Activated CD4-positive, alpha-beta memory T cell treated with anti-CD3 and anti-CD28 coated beads for 36 hours (primary cell): ENCODE measurements at regions of chr10 and their contacts with region 1.

Region 1: GRCh38 chr10:110556969-110557601 is 10.4 kb upstream of the SMC3 start:
- DNase-seq: peak; percentile 80
- H3K4me3 Mint-ChIP-seq: no peak overlapping the region
- H3K27ac Mint-ChIP-seq: no peak overlapping the region
- H3K4me1 Mint-ChIP-seq: peaks cover 2% of the 10 kb centered on the region
- H3K27me3 Mint-ChIP-seq: peaks cover under 1% of the 10 kb centered on the region

Region 2: GRCh38 chr10:110446954-110447608 is 110.0 kb before region 1 on chr10:
- CTCF ChIA-PET with region 1: no interaction called
- POLR2A ChIA-PET with region 1: no interaction called
- intact Hi-C with region 1: no loop called
- DNase-seq: no peak
- H3K4me3 Mint-ChIP-seq: no peak overlapping the region
- H3K27ac Mint-ChIP-seq: no peak overlapping the region
- H3K4me1 Mint-ChIP-seq: peaks cover 3% of the 10 kb centered on the region
- H3K27me3 Mint-ChIP-seq: no peaks in the 10 kb centered on the region

Region 3: DNA sequence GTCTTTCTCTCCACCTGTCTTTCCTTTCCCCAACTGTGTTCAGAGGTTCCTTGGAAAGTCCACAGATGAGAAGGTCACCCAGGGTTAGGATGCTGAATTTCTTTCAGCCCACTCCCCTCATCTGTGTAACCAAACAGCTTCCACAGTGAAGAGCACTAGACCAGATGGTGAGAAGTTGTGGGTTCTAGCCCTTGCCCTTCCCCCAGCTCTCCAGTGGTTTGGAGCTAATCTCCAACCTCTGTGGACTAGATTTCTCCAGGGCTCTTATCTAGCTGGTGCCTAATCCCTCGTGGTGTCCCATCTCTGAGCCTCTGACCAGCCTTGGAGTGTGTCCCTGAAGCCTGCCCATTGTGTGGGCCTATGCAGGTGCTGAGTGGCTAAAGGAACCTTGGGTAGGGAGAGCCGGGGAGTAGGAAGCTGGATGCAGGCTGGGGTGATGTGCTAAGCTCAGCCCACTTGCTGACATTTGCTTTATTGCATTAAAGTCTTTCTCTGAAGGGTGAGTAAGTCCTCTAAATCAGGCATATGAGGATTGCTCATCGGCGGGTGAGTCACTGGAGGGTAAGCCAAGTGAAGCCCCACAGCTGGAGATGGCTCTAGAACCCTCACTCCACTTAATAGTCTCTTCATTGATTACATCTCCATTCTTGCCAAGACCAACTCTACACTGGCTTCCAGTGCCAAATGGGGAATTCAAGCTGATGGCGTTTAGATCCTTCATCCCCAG is 44.5 kb before region 1 on chr10:
- CTCF ChIA-PET with region 1: no interaction called
- POLR2A ChIA-PET with region 1: no interaction called
- intact Hi-C with region 1: no loop called
- DNase-seq: peak; percentile 82
- H3K4me3 Mint-ChIP-seq: no peak overlapping the region
- H3K27ac Mint-ChIP-seq: peak overlapping the region; percentile 85
- H3K4me1 Mint-ChIP-seq: peaks cover 60% of the 10 kb centered on the region
- H3K27me3 Mint-ChIP-seq: no peaks in the 10 kb centered on the region

Region 4: DNA sequence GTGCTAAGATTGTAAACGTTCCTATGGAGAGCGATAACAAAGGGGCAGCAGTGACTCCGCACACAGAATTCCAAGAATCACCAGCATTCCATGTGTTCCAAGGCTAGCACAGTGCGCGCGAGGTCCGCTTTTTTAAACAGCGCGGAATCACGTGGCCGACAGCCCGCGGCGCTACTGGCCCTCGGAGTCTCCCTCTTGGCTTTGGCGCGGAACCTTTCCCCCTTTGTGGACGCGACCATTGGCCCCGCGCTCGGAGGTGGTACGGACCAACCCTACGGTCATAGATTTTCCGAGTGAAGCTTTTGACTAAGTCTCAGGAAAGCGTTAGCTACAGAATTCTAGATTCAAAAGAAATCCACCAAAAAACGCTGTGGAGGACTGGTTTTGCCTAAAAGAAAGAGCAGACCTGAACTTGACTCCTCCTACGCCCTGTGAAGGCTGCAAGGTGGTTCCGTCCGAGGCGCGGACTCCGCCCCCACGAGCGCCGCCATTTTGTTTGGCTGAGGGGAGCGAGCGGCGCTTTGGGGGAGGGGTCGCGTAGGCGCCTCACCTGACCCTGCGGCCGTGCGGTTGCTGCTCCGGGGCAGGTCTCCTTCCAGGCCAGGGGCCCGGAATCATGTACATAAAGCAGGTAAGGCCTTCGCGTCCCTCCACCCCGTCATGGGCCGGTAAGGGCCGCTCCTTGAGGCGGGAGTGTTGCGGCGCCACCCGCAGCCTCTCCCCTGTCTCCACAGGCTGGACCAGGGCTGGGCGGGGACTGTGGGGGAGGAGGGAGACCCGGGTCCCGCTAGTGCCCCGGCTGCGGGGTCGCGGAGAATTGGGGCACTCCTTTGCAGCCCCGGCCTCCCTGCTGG is 10.3 kb after region 1 on chr10 and contains the start of gene SMC3:
- CTCF ChIA-PET with region 1: interaction called, 4 read pairs
- POLR2A ChIA-PET with region 1: interaction called, 5 read pairs
- intact Hi-C with region 1: loop called (anchors 1 kb)
- DNase-seq: peak; percentile 94
- H3K4me3 Mint-ChIP-seq: peak within 1 kb of the TSS; percentile 93
- H3K27ac Mint-ChIP-seq: peak within 1 kb of the TSS; percentile 97
- H3K4me1 Mint-ChIP-seq: peaks cover 43% of the 10 kb centered on the region
- H3K27me3 Mint-ChIP-seq: peaks cover 10% of the 10 kb centered on the region
- total RNA-seq, gene SMC3: 89.5 to 92.2 TPM

Region 5: DNA sequence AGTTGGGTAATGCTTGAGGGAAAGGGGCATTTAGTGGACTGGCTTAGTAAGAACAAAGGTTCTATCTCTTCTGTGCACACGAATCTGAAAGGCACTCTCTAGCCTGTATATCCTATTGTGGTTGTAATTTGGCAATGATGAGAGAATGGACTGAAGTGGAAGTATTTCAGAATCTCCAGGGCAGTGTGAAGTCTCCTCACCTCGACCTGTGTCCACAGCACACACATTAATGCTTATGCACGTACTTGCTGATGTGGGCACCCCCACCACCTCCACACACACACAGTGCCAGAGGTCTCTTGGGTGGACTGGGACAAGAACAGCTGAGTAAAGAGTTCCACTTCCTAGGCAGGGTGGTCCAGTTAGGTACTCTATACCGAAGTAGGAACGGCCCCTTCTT is 17.3 kb after region 1 on chr10:
- CTCF ChIA-PET with region 1: interaction called, 3 read pairs
- POLR2A ChIA-PET with region 1: interaction called, 5 read pairs
- intact Hi-C with region 1: loop called (anchors 2 kb)
- DNase-seq: no peak
- H3K4me3 Mint-ChIP-seq: no peak overlapping the region
- H3K27ac Mint-ChIP-seq: no peak overlapping the region
- H3K4me1 Mint-ChIP-seq: peaks cover 62% of the 10 kb centered on the region
- H3K27me3 Mint-ChIP-seq: no peaks in the 10 kb centered on the region

Region 6: DNA sequence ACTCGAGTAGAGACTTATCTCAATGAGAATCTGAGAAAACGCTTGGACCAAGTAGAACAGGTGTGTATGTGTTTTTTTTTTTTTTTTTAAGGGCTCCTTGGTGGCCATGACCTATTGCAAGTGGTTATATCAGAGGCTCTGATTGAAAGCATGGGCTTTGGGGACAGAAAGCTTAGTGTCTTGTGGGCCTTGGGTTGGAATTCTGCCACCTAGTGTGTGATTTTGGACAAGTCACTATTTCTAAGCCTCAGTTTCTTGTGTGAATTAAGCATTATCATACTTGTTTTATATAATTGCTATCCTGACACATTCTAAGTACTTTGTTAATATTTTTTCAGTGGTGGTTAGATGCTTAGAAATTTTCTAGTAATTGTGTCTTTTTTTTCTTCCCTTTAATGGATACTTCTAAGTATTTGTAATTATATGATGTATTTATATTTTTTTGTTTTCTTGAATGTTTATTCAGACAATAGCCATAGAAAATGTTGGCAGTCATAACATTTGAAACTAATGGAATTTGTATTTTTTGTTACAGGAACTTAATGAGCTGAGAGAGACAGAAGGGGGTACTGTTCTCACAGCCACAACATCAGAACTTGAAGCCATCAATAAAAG is 43.5 kb after region 1 on chr10:
- CTCF ChIA-PET with region 1: interaction called, 8 read pairs
- POLR2A ChIA-PET with region 1: no interaction called
- intact Hi-C with region 1: loop called (anchors 1 kb)
- DNase-seq: no peak
- H3K4me3 Mint-ChIP-seq: no peak overlapping the region
- H3K27ac Mint-ChIP-seq: peak overlapping the region; percentile 13
- H3K4me1 Mint-ChIP-seq: no peaks in the 10 kb centered on the region
- H3K27me3 Mint-ChIP-seq: no peaks in the 10 kb centered on the region